Activated B cell treated with CpG ODN at 0.5 μM for 24 hours (primary cell): ENCODE measurements at regions of chr7 and their contacts with region 1.

Region 1: GRCh38 chr7:17298207-17298839 is at the start of gene AHR:
- DNase-seq: no peak
- ATAC-seq: peak; percentile 80
- H3K4me3 Mint-ChIP-seq: peak within 1 kb of the TSS; percentile 86
- H3K27ac Mint-ChIP-seq: peak within 1 kb of the TSS; percentile 86
- H3K4me1 Mint-ChIP-seq: peaks cover 38% of the 10 kb centered on the region
- H3K27me3 Mint-ChIP-seq: no peaks in the 10 kb centered on the region
- CTCF ChIP-seq: no peak
- total RNA-seq, gene AHR: 21.4 and 24.4 TPM in 2 replicates

Region 2: GRCh38 chr7:16645593-16646471 is 652.5 kb before region 1 on chr7 and contains the starts of genes ANKMY2 and BZW2:
- CTCF ChIA-PET with region 1: no interaction called
- POLR2A ChIA-PET with region 1: interaction called, 10 read pairs
- intact Hi-C with region 1: loop called (anchors 1 kb)
- DNase-seq: peak; percentile 86
- ATAC-seq: peak; percentile 86
- H3K4me3 Mint-ChIP-seq: peak within 1 kb of the TSS; percentile 99
- H3K27ac Mint-ChIP-seq: peak within 1 kb of the TSS; percentile 99
- H3K4me1 Mint-ChIP-seq: peaks cover 56% of the 10 kb centered on the region
- H3K27me3 Mint-ChIP-seq: no peaks in the 10 kb centered on the region
- CTCF ChIP-seq: no peak
- total RNA-seq, gene ANKMY2: 9.4 and 11.3 TPM in 2 replicates
- total RNA-seq, gene BZW2: 47.2 and 48.2 TPM in 2 replicates

Region 3: DNA sequence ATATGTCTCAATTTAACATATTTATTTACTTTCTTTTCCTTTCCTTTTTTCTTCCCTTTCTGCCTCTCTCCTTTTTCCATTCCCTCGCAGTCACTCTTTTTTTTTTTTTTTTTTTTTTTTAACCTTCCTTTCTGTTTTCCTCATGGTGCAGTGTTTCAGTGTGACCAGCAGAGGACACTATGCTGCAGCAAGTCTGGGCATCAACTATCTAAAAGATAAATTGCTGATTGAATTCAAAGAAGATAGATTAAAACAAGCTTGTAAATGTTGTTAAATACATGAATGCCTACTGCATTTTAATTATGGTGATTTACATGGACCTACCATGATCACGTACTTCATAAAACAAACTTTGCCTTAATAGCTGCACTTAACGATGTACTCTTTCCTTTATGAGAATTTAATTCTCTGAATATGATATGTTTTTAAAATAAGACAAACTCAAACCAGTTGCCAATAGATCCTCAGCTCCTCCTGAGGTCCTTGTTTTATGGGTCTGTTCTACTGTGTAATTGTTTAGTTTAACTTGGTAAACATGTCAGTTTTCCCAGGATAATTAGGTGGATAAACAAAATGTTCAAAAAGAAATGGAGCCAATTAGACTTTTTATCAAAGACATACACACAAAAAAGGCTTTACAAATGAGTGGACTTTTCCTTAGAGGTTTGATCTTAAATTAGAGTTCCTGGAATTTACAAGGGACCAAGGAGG is 315.5 kb before region 1 on chr7:
- CTCF ChIA-PET with region 1: interaction called, 49 read pairs
- POLR2A ChIA-PET with region 1: no interaction called
- intact Hi-C with region 1: loop called (anchors 1 kb)
- DNase-seq: no peak
- ATAC-seq: peak; percentile 64
- H3K4me3 Mint-ChIP-seq: peak overlapping the region; percentile 30
- H3K27ac Mint-ChIP-seq: peak overlapping the region; percentile 15
- H3K4me1 Mint-ChIP-seq: peaks cover 7% of the 10 kb centered on the region
- H3K27me3 Mint-ChIP-seq: peaks cover 2% of the 10 kb centered on the region
- CTCF ChIP-seq: peak; percentile 57

Region 4: DNA sequence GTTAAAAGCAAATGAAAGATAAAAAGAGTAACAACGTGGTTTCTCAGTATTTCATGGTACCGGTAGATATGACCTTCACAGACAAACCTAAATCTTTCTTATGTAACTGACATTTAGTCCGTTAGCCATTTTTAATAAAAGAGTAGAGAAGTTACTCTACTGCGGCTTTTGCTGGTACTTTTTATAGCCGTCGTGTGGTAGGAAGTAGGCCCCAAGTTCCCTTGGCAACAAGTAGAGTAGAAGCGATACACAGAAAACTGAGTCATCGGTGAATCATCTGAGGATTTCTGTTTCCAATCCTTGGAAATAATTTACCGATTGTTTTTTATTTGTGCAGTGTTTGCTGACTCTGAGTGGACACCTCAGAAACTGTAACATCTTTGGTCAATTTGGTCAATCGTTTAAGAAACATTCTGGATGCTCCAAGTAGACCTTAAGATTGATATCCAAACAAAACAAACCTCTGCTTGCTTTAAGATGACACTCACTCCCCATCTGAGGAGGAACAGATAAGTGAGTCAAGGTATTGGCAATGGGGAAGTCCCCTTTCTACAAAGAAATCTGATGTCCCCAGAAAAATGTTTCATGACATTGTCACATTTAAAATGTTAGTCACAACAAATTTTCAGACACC is 63.8 kb before region 1 on chr7:
- CTCF ChIA-PET with region 1: interaction called, 4 read pairs
- POLR2A ChIA-PET with region 1: interaction called, 8 read pairs
- intact Hi-C with region 1: loop called (anchors 1 kb)
- DNase-seq: peak; percentile 17
- ATAC-seq: peak; percentile 86
- H3K4me3 Mint-ChIP-seq: peak overlapping the region; percentile 77
- H3K27ac Mint-ChIP-seq: peak overlapping the region; percentile 98
- H3K4me1 Mint-ChIP-seq: peaks cover 29% of the 10 kb centered on the region
- H3K27me3 Mint-ChIP-seq: no peaks in the 10 kb centered on the region
- CTCF ChIP-seq: no peak

Region 5: GRCh38 chr7:17530741-17531417 is 232.6 kb after region 1 on chr7:
- CTCF ChIA-PET with region 1: interaction called, 10 read pairs
- POLR2A ChIA-PET with region 1: no interaction called
- intact Hi-C with region 1: loop called (anchors 1 kb)
- DNase-seq: no peak
- ATAC-seq: no peak
- H3K4me3 Mint-ChIP-seq: no peak overlapping the region
- H3K27ac Mint-ChIP-seq: no peak overlapping the region
- H3K4me1 Mint-ChIP-seq: no peaks in the 10 kb centered on the region
- H3K27me3 Mint-ChIP-seq: no peaks in the 10 kb centered on the region
- CTCF ChIP-seq: no peak

Region 6: DNA sequence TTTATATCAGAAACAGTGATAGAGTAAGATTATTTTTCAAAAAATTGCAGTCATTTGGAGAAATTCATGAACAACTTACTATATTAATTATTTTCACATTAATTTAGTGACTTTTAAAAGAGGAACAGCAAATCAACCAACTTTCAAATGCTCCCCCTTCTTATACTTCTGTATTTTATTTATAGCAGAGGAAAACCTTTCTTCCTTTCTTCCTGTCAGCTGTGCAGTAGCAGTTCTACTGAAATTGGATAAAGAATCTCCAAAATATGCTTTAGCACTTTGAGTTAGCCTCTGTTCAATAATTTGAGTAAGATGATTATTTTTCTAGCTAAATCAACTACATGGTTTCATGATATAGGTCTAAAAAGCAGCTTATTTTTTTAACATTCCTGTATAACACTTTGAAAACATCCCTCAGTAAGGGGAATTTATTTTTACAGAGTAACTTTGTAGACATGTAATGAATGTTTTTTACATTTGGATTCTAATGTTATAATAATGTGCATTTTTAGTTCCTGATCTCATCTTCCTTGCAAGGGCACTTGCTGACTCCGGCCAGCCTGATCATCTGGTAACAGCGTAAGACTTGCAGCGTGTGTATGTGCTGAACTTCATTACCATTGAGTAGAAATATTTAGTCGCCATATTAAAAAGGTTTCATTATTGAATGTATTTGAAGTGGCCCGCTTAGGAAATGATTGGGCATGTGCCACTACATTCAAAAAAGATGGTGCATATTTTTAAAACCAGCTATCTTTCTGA is 1038.9 kb after region 1 on chr7:
- CTCF ChIA-PET with region 1: no interaction called
- POLR2A ChIA-PET with region 1: no interaction called
- intact Hi-C with region 1: loop called (anchors 5 kb)
- DNase-seq: no peak
- ATAC-seq: peak; percentile 51
- H3K4me3 Mint-ChIP-seq: peak overlapping the region; percentile 71
- H3K27ac Mint-ChIP-seq: peak overlapping the region; percentile 78
- H3K4me1 Mint-ChIP-seq: peaks cover 72% of the 10 kb centered on the region
- H3K27me3 Mint-ChIP-seq: no peaks in the 10 kb centered on the region
- CTCF ChIP-seq: no peak